Posterior vena cava (tissue), 2 donors: ENCODE measurements at regions of chr19 and their contacts with region 1.

Region 1: GRCh38 chr19:38849860-38850435 is at the start of gene HNRNPL:
- DNase-seq: peak; percentile 99
- total RNA-seq, gene HNRNPL: 191 to 194 TPM

Region 2: GRCh38 chr19:38647368-38647965 is 202.5 kb before region 1 on chr19 and contains the start of gene ACTN4:
- intact Hi-C with region 1: loop called in 1 of 2 experiments (anchors 5 kb)
- DNase-seq: peak; percentile 100
- total RNA-seq, gene ACTN4: 661 to 878 TPM

Region 3: DNA sequence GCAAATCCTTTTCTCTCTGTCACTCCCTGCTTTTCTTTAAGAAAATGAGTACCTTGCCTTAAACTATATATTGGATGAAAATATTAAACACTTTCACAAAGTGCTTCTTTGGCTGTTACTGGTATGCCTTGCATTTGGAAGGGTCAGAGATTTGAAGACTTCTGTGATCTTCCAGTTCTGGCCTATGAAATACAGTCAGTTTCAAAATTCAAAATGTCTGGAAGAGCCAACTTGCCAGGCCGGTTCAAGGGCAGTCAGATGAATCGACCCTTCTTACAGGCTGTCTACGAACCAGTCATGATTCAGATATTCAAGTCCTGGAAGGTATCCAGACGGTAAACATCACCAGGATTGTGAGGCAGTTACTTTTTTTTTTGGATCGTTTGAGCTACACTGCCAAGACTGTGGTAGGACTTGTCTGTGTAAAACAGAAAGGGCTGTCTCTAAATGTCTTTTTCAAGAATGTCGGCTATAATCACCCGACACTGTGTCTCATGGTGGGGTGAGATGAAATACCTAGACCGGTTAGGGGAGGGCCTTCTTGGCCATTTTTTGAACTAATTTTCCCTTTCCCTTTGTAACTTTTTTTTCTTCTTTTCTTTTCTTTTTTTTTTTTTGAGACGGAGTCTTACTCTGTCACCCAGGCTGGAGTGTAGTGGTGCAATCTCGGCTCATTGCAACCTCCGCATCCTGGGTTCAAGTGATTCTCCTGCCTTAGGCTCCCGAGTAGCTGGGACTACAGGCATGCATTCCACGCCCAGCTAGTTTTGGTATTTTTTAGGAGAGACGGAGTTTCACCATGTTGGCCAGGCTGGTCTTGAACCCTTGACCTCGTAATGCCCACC is 191.3 kb before region 1 on chr19:
- intact Hi-C with region 1: no loop called
- DNase-seq: no peak

Region 4: GRCh38 chr19:38736413-38737280 is 113.3 kb before region 1 on chr19:
- intact Hi-C with region 1: no loop called
- DNase-seq: peak; percentile 86

Region 5: DNA sequence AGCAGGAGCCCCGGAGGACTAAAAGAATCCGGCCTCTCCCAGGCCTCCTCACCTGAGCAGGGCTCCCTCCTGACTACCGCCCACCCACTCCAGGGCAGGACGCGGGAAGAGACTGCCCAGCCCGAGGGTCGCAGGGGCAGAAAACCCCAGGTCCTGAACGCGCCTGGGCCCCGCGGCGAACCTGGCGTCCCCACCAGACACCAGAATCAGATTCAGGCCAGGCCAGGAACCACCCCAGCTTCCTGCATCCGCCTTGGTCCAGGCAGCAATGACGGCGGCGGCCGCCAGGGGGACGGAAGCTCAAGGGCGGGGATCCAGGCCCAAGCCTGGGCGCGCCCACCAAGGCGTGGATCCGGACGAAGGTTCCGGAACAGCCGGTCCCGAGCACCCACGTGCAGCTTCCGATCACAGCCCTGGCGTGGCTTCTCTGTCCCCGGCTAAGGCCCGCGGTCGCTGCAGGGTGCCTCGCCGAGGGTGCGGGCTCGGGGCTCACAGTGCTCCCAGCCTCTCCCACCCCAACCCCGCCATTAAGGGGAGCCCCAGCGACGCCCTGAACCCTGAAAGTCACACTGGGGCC is 80.2 kb before region 1 on chr19:
- intact Hi-C with region 1: no loop called
- DNase-seq: peak; percentile 98

Region 6: DNA sequence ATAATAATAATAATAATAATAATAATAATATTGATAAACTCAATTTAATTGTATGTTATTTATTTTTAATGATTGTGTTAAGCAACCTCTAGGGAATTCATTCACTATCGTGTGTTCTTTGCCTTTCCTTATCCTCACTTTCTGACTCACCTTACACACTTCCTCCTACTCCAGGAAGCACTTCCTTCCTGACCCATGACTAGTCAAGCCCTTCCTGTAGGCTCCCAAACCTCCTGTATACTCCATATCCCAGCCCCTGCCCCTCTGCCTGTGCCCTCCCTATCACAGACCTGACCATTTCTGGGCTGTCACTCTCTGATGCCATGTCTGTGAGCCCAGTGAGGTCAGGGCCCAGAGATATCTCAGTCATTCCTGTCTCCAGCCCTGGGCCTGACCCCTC is 44.8 kb before region 1 on chr19:
- intact Hi-C with region 1: no loop called
- DNase-seq: no peak

Region 7: GRCh38 chr19:38877781-38878574 is 28.0 kb after region 1 on chr19 and contains the start of gene RINL:
- intact Hi-C with region 1: loop called in 1 of 2 experiments (anchors 2 kb)
- DNase-seq: no peak
- total RNA-seq, gene RINL: 5.8 to 6.1 TPM